ENCODE measurements at regions of chr2 and their contacts with region 1.

Region 1: DNA sequence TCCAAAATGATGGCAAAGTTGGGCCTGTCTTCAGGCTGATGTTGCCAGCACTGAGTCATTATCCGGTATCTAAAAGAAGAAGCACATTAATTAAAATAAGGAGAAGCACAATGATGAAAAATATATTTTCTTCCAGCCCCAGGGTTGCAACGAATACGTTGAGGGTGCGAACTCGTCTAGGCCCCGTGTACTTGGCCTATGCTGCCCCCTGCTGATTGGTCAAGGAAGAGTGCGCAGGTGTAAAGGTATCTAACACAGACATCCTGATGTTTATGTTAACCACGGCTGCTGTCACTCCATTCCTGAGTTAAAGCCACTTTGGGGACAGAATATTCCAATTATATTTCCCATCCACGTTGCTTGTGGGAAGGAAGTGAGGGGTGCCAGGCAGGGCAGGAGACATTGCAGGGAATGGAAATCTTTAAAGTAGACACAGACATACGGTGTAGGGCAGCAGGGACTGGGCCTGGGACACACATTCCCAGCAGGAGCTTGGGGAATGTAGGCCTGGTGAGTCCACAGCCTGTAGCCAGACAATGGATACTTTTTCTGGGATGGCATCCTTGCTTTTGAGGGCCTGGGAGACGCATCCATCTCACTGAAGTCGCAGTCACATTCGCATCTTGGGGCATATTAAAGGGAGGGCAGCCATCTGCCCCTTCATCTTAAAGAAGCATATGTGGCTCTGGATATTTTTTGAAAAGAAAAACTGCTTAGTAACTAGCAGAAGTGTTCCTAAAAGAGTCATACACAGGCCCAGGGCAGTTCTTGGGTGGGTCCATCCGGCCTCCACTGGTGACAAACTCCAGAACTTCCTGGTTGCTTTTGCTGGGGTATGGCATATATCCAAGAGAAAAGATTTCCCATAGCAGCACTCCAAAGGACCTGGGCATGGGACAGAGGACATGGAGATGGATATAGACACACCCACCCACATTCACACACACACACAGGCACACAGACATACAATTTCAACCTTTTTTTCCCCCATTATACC is 81.9 kb downstream of the CLIP4 start:
- DNase-seq: peak; percentile 84
- H3K4me3 Mint-ChIP-seq: no peak overlapping the region
- H3K27ac Mint-ChIP-seq: peak overlapping the region; percentile 32
- H3K4me1 Mint-ChIP-seq: peaks cover 25% of the 10 kb centered on the region
- H3K27me3 Mint-ChIP-seq: no peaks in the 10 kb centered on the region
- CTCF ChIP-seq: peak; percentile 80

Region 2: DNA sequence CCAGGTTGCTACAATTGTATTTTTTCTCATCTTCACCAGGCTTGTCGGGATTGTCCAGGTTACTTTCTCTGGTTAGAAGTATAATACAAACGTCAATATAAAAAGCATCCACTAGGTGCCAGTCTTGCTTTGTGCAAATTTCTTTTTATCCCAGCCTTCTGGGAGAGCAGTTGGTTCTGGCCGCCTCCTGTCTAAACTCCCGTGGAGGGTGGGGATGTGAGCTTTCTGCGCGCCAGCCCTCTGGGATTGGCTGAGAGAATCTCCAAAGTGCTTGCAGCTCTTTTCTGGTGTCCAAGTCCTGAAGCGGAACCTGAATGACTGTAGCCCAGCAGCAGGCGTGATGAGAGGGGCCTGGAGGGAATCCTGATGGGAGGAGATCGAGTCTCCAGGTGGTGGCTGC is 238.4 kb before region 1 on chr2:
- CTCF ChIA-PET with region 1: no interaction called
- intact Hi-C with region 1: loop called (anchors 2 kb)
- DNase-seq: peak; percentile 65
- H3K4me3 Mint-ChIP-seq: no peak overlapping the region
- H3K27ac Mint-ChIP-seq: no peak overlapping the region
- H3K4me1 Mint-ChIP-seq: peaks cover 8% of the 10 kb centered on the region
- H3K27me3 Mint-ChIP-seq: no peaks in the 10 kb centered on the region
- CTCF ChIP-seq: peak; percentile 72

Region 3: GRCh38 chr2:29053670-29054400 is 143.3 kb before region 1 on chr2:
- CTCF ChIA-PET with region 1: no interaction called
- intact Hi-C with region 1: loop called (anchors 1 kb)
- DNase-seq: peak; percentile 45
- H3K4me3 Mint-ChIP-seq: no peak overlapping the region
- H3K27ac Mint-ChIP-seq: no peak overlapping the region
- H3K4me1 Mint-ChIP-seq: peaks cover 50% of the 10 kb centered on the region
- H3K27me3 Mint-ChIP-seq: no peaks in the 10 kb centered on the region
- CTCF ChIP-seq: peak; percentile 28